B cell (primary cell): ENCODE measurements at regions of chr1 and their contacts with region 1.

Region 1: GRCh38 chr1:161153679-161154426 is at the start of gene UFC1:
- DNase-seq: peak; percentile 94
- ATAC-seq: peak; percentile 97
- H3K4me3 ChIP-seq: peak within 1 kb of the TSS; percentile 88 to 100 (median 90)
- H3K4me3 Mint-ChIP-seq: peak within 1 kb of the TSS; percentile 97
- H3K27ac ChIP-seq: peak within 1 kb of the TSS; percentile 95 to 98
- H3K27ac Mint-ChIP-seq: peak within 1 kb of the TSS; percentile 99
- H3K4me1 ChIP-seq: peaks cover 15 to 17% of the 10 kb centered on the region in 2 donors
- H3K4me1 Mint-ChIP-seq: peaks cover 26% of the 10 kb centered on the region
- H3K27me3 ChIP-seq: no peaks in the 10 kb centered on the region
- H3K27me3 Mint-ChIP-seq: no peaks in the 10 kb centered on the region
- CTCF ChIP-seq: no peak
- total RNA-seq, gene UFC1: 78.1 and 91.0 TPM in 2 replicates

Region 2: DNA sequence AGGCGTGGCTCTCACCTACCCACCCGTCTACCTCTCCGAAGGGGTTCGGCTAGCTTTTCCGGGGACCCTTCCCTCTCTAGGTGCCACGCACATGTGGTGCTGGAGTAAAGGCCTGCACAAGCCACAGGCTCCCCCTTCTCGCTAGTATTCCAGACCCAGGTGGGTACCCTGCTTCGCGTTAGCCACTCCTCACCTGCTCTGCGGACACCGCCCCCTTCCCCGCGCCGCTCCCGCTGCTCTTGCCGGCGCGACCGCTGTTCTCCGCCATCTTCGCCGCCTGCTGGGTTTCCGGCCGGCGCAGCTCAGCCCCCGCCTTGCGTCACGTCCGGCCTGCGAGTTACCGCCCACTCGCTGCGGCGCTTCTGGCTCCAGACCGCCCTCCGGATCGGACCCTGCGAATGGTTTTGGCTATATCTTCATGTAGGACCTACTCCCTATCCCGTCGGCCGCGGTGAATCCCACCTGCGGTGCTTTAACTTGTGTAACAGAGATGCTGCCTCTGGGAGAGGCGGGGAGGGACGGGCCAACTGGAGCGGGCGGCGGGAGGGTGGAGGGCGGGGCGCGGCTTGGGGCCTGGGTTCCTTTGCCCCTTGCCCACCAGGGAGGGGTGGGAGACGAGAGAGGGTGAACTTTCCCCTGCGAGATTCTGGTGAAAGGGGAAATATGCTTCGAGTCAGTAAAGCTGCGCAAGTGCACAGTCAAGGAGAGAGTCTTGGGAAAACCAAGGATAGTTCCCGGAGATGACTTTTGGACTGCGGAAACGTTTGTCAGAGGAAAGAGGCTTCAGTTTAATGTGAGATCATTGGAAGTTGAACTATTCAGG is 35.9 kb before region 1 on chr1 and contains the starts of genes NIT1 and PFDN2:
- CTCF ChIA-PET with region 1: no interaction called
- POLR2A ChIA-PET with region 1: interaction called, 7 read pairs
- intact Hi-C with region 1: loop called (anchors 1 kb)
- DNase-seq: peak; percentile 90
- ATAC-seq: peak; percentile 84
- H3K4me3 ChIP-seq: peak within 1 kb of the TSS; percentile 71 to 98 (median 97)
- H3K4me3 Mint-ChIP-seq: peak within 1 kb of the TSS; percentile 97
- H3K27ac ChIP-seq: peak within 1 kb of the TSS; percentile 86 to 89
- H3K27ac Mint-ChIP-seq: peak within 1 kb of the TSS; percentile 94
- H3K4me1 ChIP-seq: peaks cover 45 to 54% of the 10 kb centered on the region in 2 donors
- H3K4me1 Mint-ChIP-seq: peaks cover 78% of the 10 kb centered on the region
- H3K27me3 ChIP-seq: no peaks in the 10 kb centered on the region
- H3K27me3 Mint-ChIP-seq: no peaks in the 10 kb centered on the region
- CTCF ChIP-seq: no peak
- total RNA-seq, gene NIT1: 53.5 and 56.1 TPM in 2 replicates
- total RNA-seq, gene PFDN2: 29.9 and 32.3 TPM in 2 replicates

Region 3: GRCh38 chr1:161229896-161230295 is 76.0 kb after region 1 on chr1:
- CTCF ChIA-PET with region 1: no interaction called
- POLR2A ChIA-PET with region 1: no interaction called
- intact Hi-C with region 1: no loop called
- DNase-seq: no peak
- ATAC-seq: no peak
- H3K4me3 ChIP-seq: no peak overlapping the region
- H3K4me3 Mint-ChIP-seq: no peak overlapping the region
- H3K27ac ChIP-seq: no peak overlapping the region
- H3K27ac Mint-ChIP-seq: no peak overlapping the region
- H3K4me1 ChIP-seq: peaks cover 22 to 29% of the 10 kb centered on the region in 2 donors
- H3K4me1 Mint-ChIP-seq: peaks cover 31% of the 10 kb centered on the region
- H3K27me3 ChIP-seq: no peaks in the 10 kb centered on the region
- H3K27me3 Mint-ChIP-seq: no peaks in the 10 kb centered on the region
- CTCF ChIP-seq: no peak